A673 (cell line): ENCODE measurements at regions of chrX and their contacts with region 1.

Region 1: DNA sequence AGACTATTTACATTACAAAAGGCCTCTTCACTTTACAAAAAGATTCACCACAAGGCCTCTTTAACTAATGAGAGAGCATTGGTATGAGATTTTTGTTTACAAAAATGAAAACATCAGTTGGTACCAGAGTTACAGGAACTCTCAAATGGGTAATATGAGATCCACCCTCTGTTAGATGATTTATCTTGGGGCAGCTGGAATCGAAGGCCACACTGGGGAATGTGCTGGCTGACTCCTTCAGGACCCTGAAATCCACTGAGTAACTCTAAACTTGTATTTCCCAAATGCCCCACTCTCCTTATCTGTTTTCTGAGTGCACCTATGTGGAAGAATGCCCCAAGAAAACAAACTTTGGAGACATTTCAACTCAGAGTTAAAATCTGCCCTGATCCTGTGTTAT is 232.9 kb upstream of the F9 start:
- DNase-seq: no peak
- H3K4me3 ChIP-seq: no peak overlapping the region
- H3K27ac ChIP-seq: no peak overlapping the region
- H3K4me1 ChIP-seq: peaks cover 3% of the 10 kb centered on the region
- H3K27me3 ChIP-seq: no peaks in the 10 kb centered on the region
- CTCF ChIP-seq: no peak

Region 2: DNA sequence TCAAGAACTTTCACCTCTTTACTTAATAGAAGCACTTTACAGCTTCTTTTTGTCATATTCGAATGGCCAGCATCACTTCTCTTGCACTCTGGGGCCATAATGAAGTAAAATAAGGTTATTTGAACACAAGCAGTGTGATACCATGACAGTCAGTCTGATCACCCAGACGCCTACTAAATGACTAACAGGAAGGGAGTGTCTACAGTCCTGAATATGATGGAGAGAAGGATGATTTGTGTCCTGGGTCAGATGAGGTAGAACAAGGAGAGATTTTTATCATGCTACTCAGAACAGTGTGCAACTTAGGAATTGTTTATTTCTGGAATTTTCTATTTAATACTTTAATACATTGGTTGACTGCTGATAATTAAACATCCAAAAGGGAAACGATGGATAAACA is 51.3 kb before region 1 on chrX:
- CTCF ChIA-PET with region 1: no interaction called
- POLR2A ChIA-PET with region 1: no interaction called
- intact Hi-C with region 1: loop called (anchors 5 kb)
- DNase-seq: no peak
- H3K4me3 ChIP-seq: no peak overlapping the region
- H3K27ac ChIP-seq: no peak overlapping the region
- H3K4me1 ChIP-seq: no peaks in the 10 kb centered on the region
- H3K27me3 ChIP-seq: no peaks in the 10 kb centered on the region
- CTCF ChIP-seq: no peak

Region 3: DNA sequence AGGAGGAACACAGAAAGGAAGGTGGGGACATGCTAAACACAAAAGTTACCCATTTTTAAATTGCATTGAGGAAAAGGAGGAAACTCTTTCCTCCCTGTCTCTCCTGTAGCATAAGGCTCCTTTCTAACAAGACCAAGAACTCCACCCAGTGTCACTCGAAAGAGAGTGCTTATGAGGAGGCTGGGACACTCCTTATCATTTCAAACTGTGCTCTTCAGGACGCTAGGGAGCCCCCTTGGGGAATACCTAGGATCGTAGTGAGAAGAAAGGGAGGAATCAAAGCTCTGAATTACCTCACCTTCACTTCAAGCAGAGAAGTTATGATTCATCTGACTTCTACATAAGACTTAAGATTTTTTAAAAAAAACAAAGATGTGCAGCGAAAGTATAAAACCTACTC is 298.4 kb after region 1 on chrX:
- CTCF ChIA-PET with region 1: no interaction called
- POLR2A ChIA-PET with region 1: no interaction called
- intact Hi-C with region 1: no loop called
- DNase-seq: peak; percentile 17
- H3K4me3 ChIP-seq: no peak overlapping the region
- H3K27ac ChIP-seq: no peak overlapping the region
- H3K4me1 ChIP-seq: no peaks in the 10 kb centered on the region
- H3K27me3 ChIP-seq: no peaks in the 10 kb centered on the region
- CTCF ChIP-seq: 0 out of 2 replicates have a peak, but pooled peaks have one; percentile 15

Region 4: GRCh38 chrX:140983730-140984129 is 1686.1 kb after region 1 on chrX:
- CTCF ChIA-PET with region 1: no interaction called
- POLR2A ChIA-PET with region 1: no interaction called
- intact Hi-C with region 1: no loop called
- DNase-seq: no peak
- H3K4me3 ChIP-seq: no peak overlapping the region
- H3K27ac ChIP-seq: no peak overlapping the region
- H3K4me1 ChIP-seq: no peaks in the 10 kb centered on the region
- H3K27me3 ChIP-seq: no peaks in the 10 kb centered on the region
- CTCF ChIP-seq: no peak